A673 (cell line): ENCODE measurements at regions of chr7 and their contacts with region 1.

Region 1: GRCh38 chr7:44200647-44201461 is at the start of gene YKT6:
- DNase-seq: peak; percentile 97
- H3K4me3 ChIP-seq: peak within 1 kb of the TSS; percentile 96
- H3K27ac ChIP-seq: peak within 1 kb of the TSS; percentile 78
- H3K4me1 ChIP-seq: no peaks in the 10 kb centered on the region
- H3K27me3 ChIP-seq: no peaks in the 10 kb centered on the region
- CTCF ChIP-seq: peak; percentile 52
- total RNA-seq, gene YKT6: 126 and 140 TPM in 2 replicates

Region 2: GRCh38 chr7:44072364-44073231 is 128.3 kb before region 1 on chr7:
- CTCF ChIA-PET with region 1: interaction called, 3 read pairs
- POLR2A ChIA-PET with region 1: no interaction called
- intact Hi-C with region 1: loop called (anchors 5 kb)
- DNase-seq: peak; percentile 74
- H3K4me3 ChIP-seq: no peak overlapping the region
- H3K27ac ChIP-seq: no peak overlapping the region
- H3K4me1 ChIP-seq: no peaks in the 10 kb centered on the region
- H3K27me3 ChIP-seq: no peaks in the 10 kb centered on the region
- CTCF ChIP-seq: peak; percentile 73

Region 3: GRCh38 chr7:44082541-44083207 is 118.2 kb before region 1 on chr7:
- CTCF ChIA-PET with region 1: no interaction called
- POLR2A ChIA-PET with region 1: no interaction called
- intact Hi-C with region 1: loop called (anchors 5 kb)
- DNase-seq: peak; percentile 100
- H3K4me3 ChIP-seq: peak overlapping the region; percentile 57
- H3K27ac ChIP-seq: peak overlapping the region; percentile 45
- H3K4me1 ChIP-seq: peaks cover 4% of the 10 kb centered on the region
- H3K27me3 ChIP-seq: no peaks in the 10 kb centered on the region
- CTCF ChIP-seq: no peak

Region 4: DNA sequence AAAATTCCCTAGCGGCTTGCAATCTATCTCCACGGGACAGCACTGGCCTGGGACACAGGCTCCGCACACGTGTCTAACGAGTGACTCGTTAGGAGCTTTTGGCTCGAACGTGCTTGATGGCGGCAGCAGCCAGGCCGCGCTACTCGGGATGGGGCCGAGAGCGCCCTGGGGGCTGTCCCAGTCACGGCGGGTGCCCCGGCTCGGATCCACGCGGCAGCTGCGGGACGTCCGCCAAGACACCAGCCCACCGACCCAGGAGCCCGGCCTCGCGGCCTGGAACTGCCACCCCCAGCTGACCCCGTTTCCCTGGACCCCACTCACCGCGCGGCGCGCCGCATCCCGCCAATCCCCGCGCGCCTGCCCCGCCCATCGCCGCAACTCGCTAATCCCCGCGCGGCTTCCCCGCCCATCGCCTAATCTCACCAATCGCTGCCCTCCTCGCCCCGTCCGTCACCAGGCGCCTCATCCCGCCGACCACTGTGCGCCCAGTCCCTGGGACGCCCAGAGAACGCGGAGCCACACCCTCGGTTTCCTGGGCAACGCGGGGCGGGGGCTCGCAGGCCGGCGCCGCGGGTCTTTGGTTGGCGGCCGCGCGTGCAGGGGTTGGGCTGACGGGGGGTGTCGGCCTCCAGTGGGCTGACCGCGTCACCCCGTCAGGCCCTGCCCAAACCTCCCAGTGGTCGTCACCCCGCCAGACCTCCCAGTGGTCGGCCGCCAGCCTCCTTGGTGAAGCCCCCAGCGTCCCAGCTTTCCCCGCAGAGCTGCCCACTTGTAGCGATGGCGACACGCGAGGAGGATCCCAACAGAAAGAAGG is 77.5 kb before region 1 on chr7 and contains the start of gene POLD2:
- CTCF ChIA-PET with region 1: no interaction called
- POLR2A ChIA-PET with region 1: no interaction called
- intact Hi-C with region 1: loop called (anchors 5 kb)
- DNase-seq: peak; percentile 99
- H3K4me3 ChIP-seq: peak within 1 kb of the TSS; percentile 62
- H3K27ac ChIP-seq: peak within 1 kb of the TSS; percentile 83
- H3K4me1 ChIP-seq: peaks cover 13% of the 10 kb centered on the region
- H3K27me3 ChIP-seq: no peaks in the 10 kb centered on the region
- CTCF ChIP-seq: no peak
- total RNA-seq, gene POLD2: 252 TPM in 2 replicates

Region 5: GRCh38 chr7:44416941-44417340 is 216.1 kb after region 1 on chr7:
- CTCF ChIA-PET with region 1: no interaction called
- POLR2A ChIA-PET with region 1: no interaction called
- intact Hi-C with region 1: no loop called
- DNase-seq: no peak
- H3K4me3 ChIP-seq: no peak overlapping the region
- H3K27ac ChIP-seq: no peak overlapping the region
- H3K4me1 ChIP-seq: no peaks in the 10 kb centered on the region
- H3K27me3 ChIP-seq: no peaks in the 10 kb centered on the region
- CTCF ChIP-seq: no peak